HepG2 (cell line): ENCODE measurements at regions of chr3 and their contacts with region 1.

Region 1: GRCh38 chr3:73056014-73056844 is 5.2 kb upstream of the EBLN2 start:
- DNase-seq: peak; percentile 50
- ATAC-seq: peak; percentile 40; the same call in 2 of the 3 replicates
- H3K4me3 ChIP-seq: no peak overlapping the region
- H3K27ac ChIP-seq: peak overlapping the region; percentile 35
- H3K4me1 ChIP-seq: peaks cover 9% of the 10 kb centered on the region
- H3K27me3 ChIP-seq: no peaks in the 10 kb centered on the region
- CTCF ChIP-seq: peak; percentile 63
- EP300 ChIP-seq: no peak
- POLR2A ChIP-seq: no peak
- RAD21 ChIP-seq: peak; percentile 67; the same call in 1 of the 2 replicates

Region 2: DNA sequence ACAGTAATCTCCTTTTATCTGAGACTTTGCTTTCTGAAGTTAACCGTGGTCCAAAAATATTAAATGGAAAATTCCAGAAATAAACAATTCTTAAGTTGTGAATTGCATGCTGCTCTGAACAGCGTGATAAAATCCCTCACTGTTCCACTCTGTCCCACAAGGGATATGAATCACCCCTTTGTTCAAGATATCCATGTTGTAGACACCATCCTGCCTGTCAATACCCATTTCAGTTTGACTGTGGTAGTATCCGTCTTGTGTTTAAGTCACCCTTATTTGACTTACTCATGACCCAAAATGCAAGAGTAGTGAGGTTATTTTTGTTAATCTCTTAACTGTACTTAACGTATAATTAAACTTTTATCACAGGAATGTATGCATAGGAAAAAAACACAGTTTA is 643.0 kb before region 1 on chr3:
- CTCF ChIA-PET with region 1: no interaction called
- POLR2A ChIA-PET with region 1: no interaction called
- in situ Hi-C with region 1: loop called (anchors 25 kb)
- intact Hi-C with region 1: no loop called
- DNase-seq: peak; percentile 39
- ATAC-seq: peak; percentile 65; the same call in 2 of the 3 replicates
- H3K4me3 ChIP-seq: no peak overlapping the region
- H3K27ac ChIP-seq: no peak overlapping the region
- H3K4me1 ChIP-seq: peaks cover 73% of the 10 kb centered on the region
- H3K27me3 ChIP-seq: no peaks in the 10 kb centered on the region
- CTCF ChIP-seq: no peak
- EP300 ChIP-seq: no peak
- POLR2A ChIP-seq: no peak
- RAD21 ChIP-seq: no peak

Region 3: GRCh38 chr3:72847751-72848702 is 208.2 kb before region 1 on chr3 and contains the start of gene SHQ1:
- CTCF ChIA-PET with region 1: interaction called, 12 read pairs
- POLR2A ChIA-PET with region 1: no interaction called
- in situ Hi-C with region 1: no loop called
- intact Hi-C with region 1: loop called (anchors 1 kb)
- DNase-seq: peak; percentile 91
- ATAC-seq: peak; percentile 97
- H3K4me3 ChIP-seq: peak within 1 kb of the TSS; percentile 76 to 97 (median 91)
- H3K27ac ChIP-seq: peak within 1 kb of the TSS; percentile 57
- H3K4me1 ChIP-seq: peaks cover 45% of the 10 kb centered on the region
- H3K27me3 ChIP-seq: no peaks in the 10 kb centered on the region; a peak in 1 of 5 replicates
- CTCF ChIP-seq: no peak
- EP300 ChIP-seq: no peak
- POLR2A ChIP-seq: peak; percentile 36 to 88; a peak in 3 of 4 replicates
- RAD21 ChIP-seq: 0 out of 2 replicates have a peak, but pooled peaks have one; percentile 12
- total RNA-seq, gene SHQ1: 20.3 and 25.6 TPM in 2 replicates

Region 4: GRCh38 chr3:72887705-72888545 is 168.3 kb before region 1 on chr3 and contains the start of gene GXYLT2:
- CTCF ChIA-PET with region 1: no interaction called
- POLR2A ChIA-PET with region 1: no interaction called
- in situ Hi-C with region 1: no loop called
- intact Hi-C with region 1: loop called (anchors 5 kb)
- DNase-seq: peak; percentile 48
- ATAC-seq: peak; percentile 78
- H3K4me3 ChIP-seq: peak within 1 kb of the TSS; percentile 70 to 90 (median 75)
- H3K27ac ChIP-seq: peak within 1 kb of the TSS; percentile 50
- H3K4me1 ChIP-seq: peaks cover 63% of the 10 kb centered on the region
- H3K27me3 ChIP-seq: no peaks in the 10 kb centered on the region; a peak in 1 of 5 replicates
- CTCF ChIP-seq: 0 out of 2 replicates have a peak, but pooled peaks have one; percentile 4
- EP300 ChIP-seq: no peak
- POLR2A ChIP-seq: no peak; a peak in 1 of 4 replicates
- RAD21 ChIP-seq: no peak; the same call in 1 of the 2 replicates
- total RNA-seq, gene GXYLT2: 6.9 and 7.4 TPM in 2 replicates

Region 5: DNA sequence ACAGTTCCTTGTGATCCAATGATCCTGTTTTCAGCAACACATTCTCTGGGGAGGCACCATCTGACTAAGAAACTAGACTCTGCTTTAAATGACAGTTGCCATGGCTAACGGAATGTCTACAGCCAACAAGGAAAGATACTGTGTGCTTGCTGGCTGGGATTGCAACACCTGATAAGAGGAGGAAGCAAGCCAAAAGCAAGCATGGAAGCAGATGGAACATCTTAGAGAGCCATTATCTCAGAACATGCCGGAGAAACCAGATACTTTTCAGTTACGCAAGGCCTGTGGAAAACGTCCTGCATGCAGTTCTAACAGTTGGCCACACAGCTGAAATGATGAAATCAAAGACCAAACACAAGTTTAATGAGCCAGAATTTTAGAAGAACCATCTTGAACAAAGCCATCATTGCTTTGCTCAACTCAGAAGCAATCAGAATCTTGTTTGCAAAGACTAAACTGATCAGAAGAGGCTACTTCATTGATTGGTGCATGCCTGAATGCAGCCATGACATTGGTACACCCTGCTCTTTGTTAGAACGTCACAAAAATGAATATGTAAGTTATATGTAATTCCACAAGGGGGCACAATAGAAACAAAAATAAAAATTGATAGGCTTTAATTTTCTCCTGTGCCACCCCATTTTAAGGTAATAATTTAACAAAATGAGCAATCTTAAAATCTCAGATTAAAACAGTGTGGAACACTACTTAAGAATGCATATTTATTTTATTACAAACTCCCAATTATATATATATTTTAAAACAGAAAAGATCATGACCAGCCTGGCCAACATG is 117.6 kb before region 1 on chr3:
- CTCF ChIA-PET with region 1: interaction called, 23 read pairs
- POLR2A ChIA-PET with region 1: no interaction called
- in situ Hi-C with region 1: loop called (anchors 5 kb)
- intact Hi-C with region 1: loop called (anchors 1 kb)
- DNase-seq: peak; percentile 81
- ATAC-seq: peak; percentile 98
- H3K4me3 ChIP-seq: peak overlapping the region; percentile 31 to 41 (median 36); a peak in 4 of 6 replicates
- H3K27ac ChIP-seq: peak overlapping the region; percentile 58
- H3K4me1 ChIP-seq: peaks cover 16% of the 10 kb centered on the region
- H3K27me3 ChIP-seq: no peaks in the 10 kb centered on the region
- CTCF ChIP-seq: peak; percentile 60
- EP300 ChIP-seq: peak in 1 of 2 experiments; percentile 57; a peak in 1 of 4 replicates
- POLR2A ChIP-seq: no peak
- RAD21 ChIP-seq: peak; percentile 62

Region 6: GRCh38 chr3:72996473-72997333 is 59.5 kb before region 1 on chr3 and contains the start of gene PPP4R2:
- CTCF ChIA-PET with region 1: no interaction called
- POLR2A ChIA-PET with region 1: interaction called, 5 read pairs
- in situ Hi-C with region 1: no loop called
- intact Hi-C with region 1: loop called (anchors 2 kb)
- DNase-seq: peak; percentile 73
- ATAC-seq: peak; percentile 92
- H3K4me3 ChIP-seq: peak within 1 kb of the TSS; percentile 80 to 99 (median 94)
- H3K27ac ChIP-seq: peak within 1 kb of the TSS; percentile 89
- H3K4me1 ChIP-seq: peaks cover 46% of the 10 kb centered on the region
- H3K27me3 ChIP-seq: no peaks in the 10 kb centered on the region; a peak in 1 of 5 replicates
- CTCF ChIP-seq: peak; percentile 34
- EP300 ChIP-seq: peak in 1 of 2 experiments; percentile 32; a peak in 1 of 4 replicates
- POLR2A ChIP-seq: peak; percentile 77 to 97
- RAD21 ChIP-seq: peak; percentile 36
- total RNA-seq, gene PPP4R2: 161 and 236 TPM in 2 replicates

Region 7: DNA sequence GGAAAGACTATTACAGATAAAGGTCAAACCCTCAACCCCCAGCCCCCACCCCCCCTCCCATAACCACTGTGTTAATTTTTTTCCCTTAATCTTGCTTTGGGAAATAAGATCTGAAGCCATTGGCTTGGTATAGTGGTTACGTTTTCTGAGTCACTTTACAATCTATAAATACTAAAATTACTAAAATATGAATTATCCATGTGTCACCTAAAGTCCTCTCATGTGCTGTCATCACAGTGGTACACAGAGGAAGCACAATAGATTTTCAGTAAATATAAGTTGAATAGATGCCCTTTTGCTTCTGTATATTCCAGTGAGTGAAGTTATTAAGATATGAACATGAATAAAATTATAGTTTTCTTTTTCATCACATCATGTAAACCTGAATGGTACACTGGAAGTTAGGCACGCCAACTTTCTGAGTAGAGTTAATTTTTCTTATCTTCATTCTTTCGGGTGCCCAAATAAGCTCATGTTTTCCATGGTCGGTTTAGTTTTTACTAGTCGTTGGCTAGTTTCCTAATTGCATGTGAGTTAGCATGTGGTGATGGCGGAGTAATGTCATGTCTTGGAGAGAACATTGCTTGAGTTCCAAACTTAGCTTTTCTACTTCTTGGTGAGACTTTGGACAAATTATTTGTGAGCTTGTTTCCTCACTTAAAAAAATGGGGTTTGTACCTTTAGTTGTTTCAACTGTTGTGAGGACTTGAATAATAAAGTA is 48.1 kb before region 1 on chr3:
- CTCF ChIA-PET with region 1: no interaction called
- POLR2A ChIA-PET with region 1: interaction called, 3 read pairs
- in situ Hi-C with region 1: loop called (anchors 5 kb)
- intact Hi-C with region 1: no loop called
- DNase-seq: no peak
- ATAC-seq: no peak
- H3K4me3 ChIP-seq: no peak overlapping the region
- H3K27ac ChIP-seq: no peak overlapping the region
- H3K4me1 ChIP-seq: peaks cover 85% of the 10 kb centered on the region
- H3K27me3 ChIP-seq: no peaks in the 10 kb centered on the region
- CTCF ChIP-seq: no peak
- EP300 ChIP-seq: no peak
- POLR2A ChIP-seq: no peak
- RAD21 ChIP-seq: no peak